Aorta (tissue), 5 donors: ENCODE measurements at regions of chr10 and their contacts with region 1.

Region 1: DNA sequence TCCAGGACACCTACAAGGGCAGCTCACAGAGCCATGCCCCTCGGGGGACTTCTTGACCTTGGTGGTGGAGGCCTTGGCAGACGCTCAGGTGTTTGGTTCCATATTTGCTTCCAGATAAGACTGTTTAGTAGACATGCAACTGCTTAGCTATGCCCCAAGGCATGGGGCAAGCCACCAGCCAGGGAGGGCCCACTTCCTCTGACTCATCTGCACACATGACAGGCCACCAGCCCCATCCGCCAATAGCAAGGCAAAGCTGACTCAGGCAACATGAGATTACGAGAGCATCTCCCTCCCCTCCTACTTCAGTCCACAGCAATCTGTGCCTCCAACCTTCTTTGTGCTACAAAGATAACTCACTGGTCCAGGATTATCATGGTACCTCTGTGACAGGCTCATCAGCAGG is 54.9 kb downstream of the KCNMA1 start:
- DNase-seq: peak in 1 of 2 donors; percentile 83
- ATAC-seq: no peak
- H3K4me3 ChIP-seq: no peak overlapping the region
- H3K27ac ChIP-seq: no peak overlapping the region
- H3K4me1 ChIP-seq: peaks cover 7 to 13% of the 10 kb centered on the region in 2 donors
- H3K27me3 ChIP-seq: no peaks in the 10 kb centered on the region

Region 2: GRCh38 chr10:77531441-77532001 is 51.2 kb before region 1 on chr10:
- intact Hi-C with region 1: loop called in 1 of 2 experiments (anchors 10 kb)
- DNase-seq: peak; percentile 85 to 89
- ATAC-seq: peak; percentile 75
- H3K4me3 ChIP-seq: no peak overlapping the region
- H3K27ac ChIP-seq: peak overlapping the region in 1 of 2 donors; percentile 81
- H3K4me1 ChIP-seq: peaks cover 0 to 4% of the 10 kb centered on the region in 2 donors
- H3K27me3 ChIP-seq: no peaks in the 10 kb centered on the region